ENCODE measurements at regions of chr5 and their contacts with region 1.

Region 1: GRCh38 chr5:146622391-146622790 is 106.4 kb upstream of the GPR151 start:
- DNase-seq: no peak
- H3K4me3 ChIP-seq: no peak overlapping the region
- H3K4me3 Mint-ChIP-seq: no peak overlapping the region
- H3K27ac Mint-ChIP-seq: no peak overlapping the region
- H3K4me1 ChIP-seq: no peaks in the 10 kb centered on the region
- H3K4me1 Mint-ChIP-seq: no peaks in the 10 kb centered on the region
- H3K27me3 ChIP-seq: no peaks in the 10 kb centered on the region
- H3K27me3 Mint-ChIP-seq: peaks cover 5% of the 10 kb centered on the region
- CTCF ChIP-seq: peak; percentile 44 to 51

Region 2: DNA sequence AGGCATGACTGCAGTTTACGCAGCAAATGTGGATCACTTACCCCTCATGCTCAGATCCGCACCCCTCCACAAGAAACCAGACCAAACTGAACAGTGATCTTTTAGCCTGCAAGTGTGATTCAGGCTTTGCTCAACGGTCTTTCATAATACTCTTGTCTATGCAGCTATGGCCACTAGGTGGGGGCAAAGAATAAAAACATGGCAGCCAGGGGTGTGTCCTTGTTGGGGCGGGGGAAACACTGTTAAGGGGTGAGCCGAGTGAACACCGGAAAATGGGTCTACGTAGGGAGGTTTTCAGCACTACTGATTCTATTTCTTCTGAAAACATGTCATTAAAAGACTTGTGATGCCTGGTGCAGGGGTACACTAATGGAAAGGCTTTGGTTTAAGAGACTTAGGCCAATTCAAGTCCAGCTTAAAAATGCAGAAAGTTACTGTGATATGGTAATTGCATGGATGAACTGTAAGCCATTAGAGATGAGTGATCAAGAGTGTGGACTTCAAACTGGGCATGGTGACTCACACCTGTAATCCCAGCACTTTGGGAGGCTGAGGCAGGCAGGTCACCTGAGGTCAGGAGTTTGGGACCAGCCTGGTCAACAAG is 56.5 kb before region 1 on chr5:
- CTCF ChIA-PET with region 1: interaction called, 3 read pairs
- POLR2A ChIA-PET with region 1: no interaction called
- intact Hi-C with region 1: loop called (anchors 1 kb)
- DNase-seq: peak; percentile 73 to 74
- H3K4me3 ChIP-seq: no peak overlapping the region
- H3K4me3 Mint-ChIP-seq: no peak overlapping the region
- H3K27ac Mint-ChIP-seq: no peak overlapping the region
- H3K4me1 ChIP-seq: no peaks in the 10 kb centered on the region; the same call in 1 of the 2 replicates
- H3K4me1 Mint-ChIP-seq: peaks cover 5% of the 10 kb centered on the region
- H3K27me3 ChIP-seq: no peaks in the 10 kb centered on the region
- H3K27me3 Mint-ChIP-seq: peaks cover 4% of the 10 kb centered on the region
- CTCF ChIP-seq: peak; percentile 73 to 74

Region 3: GRCh38 chr5:146595088-146595487 is 27.3 kb before region 1 on chr5:
- CTCF ChIA-PET with region 1: no interaction called
- POLR2A ChIA-PET with region 1: no interaction called
- intact Hi-C with region 1: loop called (anchors 1 kb)
- DNase-seq: peak in 1 of 2 experiments; percentile 24
- H3K4me3 ChIP-seq: no peak overlapping the region
- H3K4me3 Mint-ChIP-seq: no peak overlapping the region
- H3K27ac Mint-ChIP-seq: no peak overlapping the region
- H3K4me1 ChIP-seq: no peaks in the 10 kb centered on the region
- H3K4me1 Mint-ChIP-seq: no peaks in the 10 kb centered on the region
- H3K27me3 ChIP-seq: no peaks in the 10 kb centered on the region
- H3K27me3 Mint-ChIP-seq: no peaks in the 10 kb centered on the region
- CTCF ChIP-seq: peak; percentile 30 to 36

Region 4: DNA sequence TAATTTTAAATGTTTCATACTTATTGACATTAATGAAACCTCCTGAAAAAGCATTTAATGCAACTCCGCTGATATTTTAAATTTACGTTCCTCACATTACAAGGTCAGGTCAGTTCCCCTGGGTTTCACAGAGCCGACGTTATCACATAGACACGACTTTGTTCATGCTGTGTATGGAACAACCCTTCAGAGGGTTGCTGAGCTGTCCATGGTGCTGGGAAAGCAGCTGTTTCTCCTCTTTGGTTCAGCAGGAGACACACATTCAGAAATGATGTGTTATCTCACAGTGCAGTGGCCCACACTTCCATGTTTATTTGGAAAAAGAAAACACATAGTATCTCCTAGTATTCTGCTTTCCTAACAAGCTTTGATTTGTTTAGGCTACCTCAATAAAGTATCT is 202.6 kb after region 1 on chr5:
- CTCF ChIA-PET with region 1: no interaction called
- POLR2A ChIA-PET with region 1: no interaction called
- intact Hi-C with region 1: no loop called
- DNase-seq: peak; percentile 53 to 70
- H3K4me3 ChIP-seq: no peak overlapping the region
- H3K4me3 Mint-ChIP-seq: no peak overlapping the region
- H3K27ac Mint-ChIP-seq: no peak overlapping the region
- H3K4me1 ChIP-seq: no peaks in the 10 kb centered on the region
- H3K4me1 Mint-ChIP-seq: peaks cover 14% of the 10 kb centered on the region
- H3K27me3 ChIP-seq: no peaks in the 10 kb centered on the region
- H3K27me3 Mint-ChIP-seq: peaks cover 8% of the 10 kb centered on the region
- CTCF ChIP-seq: no peak

Measured in Caco-2 (cell line).